Activated CD8-positive, alpha-beta T cell treated with anti-CD3 and anti-CD28 coated beads, Interleukin-2, amount 10 ng/mL, durations not matched to agents 7 days and 5 days (primary cell): ENCODE measurements at regions of chr6 and their contacts with region 1.

Region 1: DNA sequence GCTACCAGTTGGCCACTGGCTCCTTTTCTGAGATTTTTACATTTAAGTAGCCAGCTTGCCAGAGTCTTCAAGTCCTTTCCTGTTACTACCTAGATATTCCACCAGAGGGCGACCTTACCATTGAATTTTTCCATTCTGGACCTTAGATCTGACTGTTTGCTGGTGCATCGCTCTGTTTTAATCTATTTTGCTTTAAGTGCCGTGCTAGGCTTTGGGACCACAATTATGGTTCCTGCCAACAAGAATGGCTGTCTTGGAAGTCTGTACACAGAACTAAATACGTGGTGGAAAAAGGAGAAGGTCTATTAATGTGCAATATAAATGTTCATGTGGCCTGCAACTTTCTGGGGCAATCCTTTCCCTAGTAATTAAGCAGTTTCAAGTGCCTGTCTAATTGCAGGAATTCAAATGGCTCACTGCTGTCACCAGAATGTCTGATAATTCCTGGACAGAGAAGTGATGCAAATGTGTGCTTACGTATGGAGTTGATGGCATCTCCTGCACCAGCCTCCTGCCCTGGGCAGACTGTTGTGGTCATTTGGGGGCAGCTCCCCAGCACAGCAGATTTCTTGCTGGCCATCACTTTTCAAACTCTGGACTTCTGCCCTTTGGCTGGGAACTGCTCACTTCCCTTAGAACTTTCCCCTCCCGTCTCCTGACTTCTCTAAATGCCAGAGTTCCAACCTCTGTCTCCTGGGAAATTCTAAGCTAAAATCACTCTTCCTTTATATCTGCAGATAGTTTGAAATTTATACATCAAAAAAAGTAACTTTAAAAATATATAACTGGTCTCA is 5.6 kb upstream of the HLA-DOA start:
- DNase-seq: peak; percentile 78
- ATAC-seq: peak; percentile 57
- H3K4me3 Mint-ChIP-seq: no peak overlapping the region
- H3K27ac Mint-ChIP-seq: no peak overlapping the region
- H3K4me1 Mint-ChIP-seq: peaks cover 28% of the 10 kb centered on the region
- H3K27me3 Mint-ChIP-seq: peaks cover 6% of the 10 kb centered on the region

Region 2: GRCh38 chr6:31336896-31337496 is 1678.0 kb before region 1 on chr6:
- CTCF ChIA-PET with region 1: no interaction called
- POLR2A ChIA-PET with region 1: no interaction called
- DNase-seq: no peak
- ATAC-seq: no peak
- H3K4me3 Mint-ChIP-seq: no peak overlapping the region
- H3K27ac Mint-ChIP-seq: no peak overlapping the region
- H3K4me1 Mint-ChIP-seq: peaks cover 15% of the 10 kb centered on the region
- H3K27me3 Mint-ChIP-seq: peaks cover 3% of the 10 kb centered on the region

Region 3: DNA sequence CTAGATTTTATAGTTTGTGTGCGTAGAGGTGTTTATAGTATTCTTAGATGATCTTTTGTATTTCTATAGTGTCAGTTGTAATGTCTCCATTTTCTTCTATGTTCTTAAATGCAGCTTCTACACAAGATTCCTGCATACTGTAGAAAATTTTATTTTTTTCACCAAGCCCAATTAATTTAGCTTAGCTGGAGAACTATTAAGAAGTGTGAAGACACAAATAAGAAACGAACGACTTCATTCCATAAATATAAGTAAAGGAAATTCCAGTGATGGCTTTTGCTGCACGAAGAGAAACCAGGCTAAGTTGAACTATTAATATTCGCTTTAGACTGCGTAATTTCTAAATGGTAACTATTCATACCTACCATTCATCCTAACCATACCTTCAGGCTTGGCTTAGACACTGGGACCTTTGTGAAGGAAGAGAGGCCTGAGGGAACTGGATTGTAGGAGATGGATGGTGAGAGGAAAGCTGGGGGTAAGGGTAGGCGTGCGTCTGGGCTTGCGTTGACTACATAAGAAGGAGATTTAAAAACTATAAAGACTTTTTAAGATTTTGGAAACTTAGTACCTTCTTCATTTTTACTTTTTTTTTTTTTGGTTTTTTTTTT is 21.6 kb before region 1 on chr6:
- CTCF ChIA-PET with region 1: no interaction called
- POLR2A ChIA-PET with region 1: no interaction called
- DNase-seq: no peak
- ATAC-seq: no peak
- H3K4me3 Mint-ChIP-seq: no peak overlapping the region
- H3K27ac Mint-ChIP-seq: no peak overlapping the region
- H3K4me1 Mint-ChIP-seq: peaks cover 3% of the 10 kb centered on the region
- H3K27me3 Mint-ChIP-seq: peaks cover 35% of the 10 kb centered on the region

Region 4: DNA sequence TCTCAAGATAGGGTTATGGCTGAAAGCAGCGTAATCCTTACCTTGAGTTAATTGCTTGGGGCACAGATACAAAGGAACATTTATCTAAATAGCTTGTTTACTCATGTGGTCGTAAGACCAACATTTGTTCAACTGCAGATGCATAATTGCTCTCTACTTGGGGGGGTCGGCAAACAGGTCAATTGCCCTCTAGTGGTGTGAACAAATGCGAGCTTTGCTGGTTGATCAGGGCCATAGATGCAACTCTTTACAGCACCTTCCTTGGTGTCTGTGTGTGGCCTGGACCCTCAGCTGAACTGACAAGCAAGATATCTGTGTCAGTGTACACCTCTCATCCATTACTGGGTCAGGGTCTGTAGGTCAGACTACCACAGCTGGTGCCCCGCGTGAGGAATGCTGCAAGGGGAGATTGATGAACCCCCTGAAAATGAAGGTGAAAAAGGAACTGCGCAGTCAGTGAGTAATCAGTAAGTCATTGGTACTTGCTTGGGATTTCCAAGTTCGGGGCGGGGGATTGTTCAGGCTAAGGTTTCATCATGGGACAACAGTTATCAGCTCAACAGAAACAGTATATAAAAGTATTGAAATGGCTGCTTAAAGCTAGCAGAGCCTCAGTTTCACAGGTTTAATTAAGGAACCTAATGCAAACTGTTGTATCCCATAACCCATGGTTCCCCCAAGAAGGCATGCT is 34.4 kb after region 1 on chr6:
- CTCF ChIA-PET with region 1: interaction called, 24 read pairs
- POLR2A ChIA-PET with region 1: no interaction called
- DNase-seq: no peak
- ATAC-seq: no peak
- H3K4me3 Mint-ChIP-seq: no peak overlapping the region
- H3K27ac Mint-ChIP-seq: no peak overlapping the region
- H3K4me1 Mint-ChIP-seq: no peaks in the 10 kb centered on the region
- H3K27me3 Mint-ChIP-seq: peaks cover 39% of the 10 kb centered on the region

Region 5: GRCh38 chr6:33082702-33083101 is 67.7 kb after region 1 on chr6:
- CTCF ChIA-PET with region 1: interaction called, 29 read pairs
- POLR2A ChIA-PET with region 1: no interaction called
- DNase-seq: no peak
- ATAC-seq: no peak
- H3K4me3 Mint-ChIP-seq: no peak overlapping the region
- H3K27ac Mint-ChIP-seq: peak overlapping the region; percentile 5
- H3K4me1 Mint-ChIP-seq: peaks cover 27% of the 10 kb centered on the region
- H3K27me3 Mint-ChIP-seq: no peaks in the 10 kb centered on the region

Region 6: DNA sequence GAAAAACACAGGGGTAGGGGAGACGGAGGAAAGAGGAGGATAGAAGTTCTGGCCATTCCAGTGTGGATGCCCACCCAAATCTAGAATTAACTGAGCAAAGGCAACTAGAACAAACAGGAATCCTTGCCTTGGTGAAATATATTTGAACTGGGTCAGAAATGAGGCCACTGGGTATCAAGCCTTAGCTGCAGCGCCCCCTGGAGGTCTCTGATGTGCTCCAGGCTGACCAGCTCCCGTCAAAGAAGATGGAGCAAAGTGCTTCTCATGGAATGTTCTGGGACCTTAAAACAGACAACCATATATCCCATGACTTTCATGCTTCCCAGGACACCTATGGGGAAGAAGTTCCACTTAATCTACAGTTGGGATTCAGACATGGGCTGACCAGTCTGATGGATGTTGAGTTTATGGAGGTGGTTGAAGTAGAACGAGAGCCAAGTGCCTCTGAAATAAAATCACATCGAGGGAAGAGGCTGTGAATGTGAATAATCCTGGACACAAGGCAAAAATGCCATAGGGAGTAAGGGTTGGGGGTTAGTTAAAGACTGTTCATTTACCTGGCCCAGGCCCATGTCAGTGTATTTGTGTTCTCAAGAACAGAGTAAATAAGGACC is 111.2 kb after region 1 on chr6:
- CTCF ChIA-PET with region 1: interaction called, 37 read pairs
- POLR2A ChIA-PET with region 1: interaction called, 3 read pairs
- DNase-seq: peak; percentile 78
- ATAC-seq: peak; percentile 84
- H3K4me3 Mint-ChIP-seq: no peak overlapping the region
- H3K27ac Mint-ChIP-seq: no peak overlapping the region
- H3K4me1 Mint-ChIP-seq: peaks cover 5% of the 10 kb centered on the region
- H3K27me3 Mint-ChIP-seq: peaks cover 30% of the 10 kb centered on the region